ENCODE measurements at regions of chr20 and their contacts with region 1.

Region 1: GRCh38 chr20:12241065-12241464 is 323.4 kb downstream of the BTBD3 start:
- DNase-seq: no peak
- H3K4me3 ChIP-seq: no peak overlapping the region
- H3K27me3 ChIP-seq: no peaks in the 10 kb centered on the region
- CTCF ChIP-seq: no peak

Region 2: GRCh38 chr20:12044969-12045368 is 196.1 kb before region 1 on chr20:
- CTCF ChIA-PET with region 1: no interaction called
- POLR2A ChIA-PET with region 1: interaction called, 10 read pairs
- DNase-seq: no peak
- H3K4me3 ChIP-seq: no peak overlapping the region
- H3K27me3 ChIP-seq: no peaks in the 10 kb centered on the region
- CTCF ChIP-seq: no peak